BJ (cell line): ENCODE measurements at regions of chr17 and their contacts with region 1.

Region 1: DNA sequence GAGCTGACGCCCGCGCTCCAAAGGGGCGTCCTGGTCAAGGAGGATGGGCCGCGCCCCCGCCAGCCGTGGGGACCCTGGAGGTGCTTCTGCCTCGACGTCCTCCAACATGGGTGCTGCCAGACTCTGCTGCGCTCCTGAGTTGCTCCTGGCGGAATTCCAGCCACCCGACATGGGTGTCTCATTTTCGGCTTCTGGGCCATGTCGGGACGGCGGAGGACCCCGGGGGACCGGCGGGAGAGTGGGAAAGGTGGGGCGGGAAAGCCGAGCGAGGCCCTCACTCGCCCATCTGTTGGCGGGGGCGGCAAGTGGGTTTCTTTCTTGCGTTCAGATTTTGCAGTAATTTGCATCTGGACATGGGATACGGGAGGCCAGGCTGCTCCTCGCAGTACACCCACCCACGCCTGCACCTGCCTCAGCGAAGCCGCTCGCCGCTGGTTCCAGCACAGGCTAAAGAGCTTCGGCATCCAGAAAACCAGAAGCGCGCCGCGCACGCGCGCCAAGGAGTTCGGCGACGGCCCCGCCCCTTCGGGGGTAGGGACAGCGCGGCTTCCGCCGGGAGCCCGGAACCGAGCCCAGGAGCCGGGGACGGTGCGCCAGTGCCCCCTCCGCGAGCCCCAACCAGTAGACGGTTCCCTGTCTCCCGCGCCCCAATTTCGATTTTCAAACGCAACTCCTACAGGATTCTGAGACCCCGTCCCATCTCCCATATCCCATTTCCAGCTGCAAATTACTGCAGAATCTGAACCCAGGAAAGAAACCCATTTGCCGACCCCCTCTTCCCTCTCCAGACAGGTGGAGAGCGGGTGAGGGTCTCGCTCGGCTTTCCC is at the start of gene ARMC7:
- DNase-seq: peak; percentile 38
- H3K4me3 ChIP-seq: peak within 1 kb of the TSS; percentile 90
- H3K27me3 ChIP-seq: no peaks in the 10 kb centered on the region
- CTCF ChIP-seq: no peak
- polyA plus RNA-seq, gene ARMC7: 5.7 and 6.9 TPM in 2 replicates

Region 2: GRCh38 chr17:73782641-73783381 is 1326.8 kb before region 1 on chr17:
- CTCF ChIA-PET with region 1: no interaction called
- POLR2A ChIA-PET with region 1: no interaction called
- DNase-seq: no peak
- H3K4me3 ChIP-seq: no peak overlapping the region
- H3K27me3 ChIP-seq: no peaks in the 10 kb centered on the region
- CTCF ChIP-seq: no peak

Region 3: GRCh38 chr17:75046582-75047289 is 62.9 kb before region 1 on chr17 and contains the starts of genes ATP5PD and KCTD2:
- CTCF ChIA-PET with region 1: interaction called, 11 read pairs
- POLR2A ChIA-PET with region 1: no interaction called
- DNase-seq: peak; percentile 85
- H3K4me3 ChIP-seq: peak within 1 kb of the TSS; percentile 100
- H3K27me3 ChIP-seq: no peaks in the 10 kb centered on the region
- CTCF ChIP-seq: no peak
- polyA plus RNA-seq, gene ATP5PD: 160 and 304 TPM in 2 replicates
- polyA plus RNA-seq, gene KCTD2: 23.5 and 28.0 TPM in 2 replicates

Region 4: DNA sequence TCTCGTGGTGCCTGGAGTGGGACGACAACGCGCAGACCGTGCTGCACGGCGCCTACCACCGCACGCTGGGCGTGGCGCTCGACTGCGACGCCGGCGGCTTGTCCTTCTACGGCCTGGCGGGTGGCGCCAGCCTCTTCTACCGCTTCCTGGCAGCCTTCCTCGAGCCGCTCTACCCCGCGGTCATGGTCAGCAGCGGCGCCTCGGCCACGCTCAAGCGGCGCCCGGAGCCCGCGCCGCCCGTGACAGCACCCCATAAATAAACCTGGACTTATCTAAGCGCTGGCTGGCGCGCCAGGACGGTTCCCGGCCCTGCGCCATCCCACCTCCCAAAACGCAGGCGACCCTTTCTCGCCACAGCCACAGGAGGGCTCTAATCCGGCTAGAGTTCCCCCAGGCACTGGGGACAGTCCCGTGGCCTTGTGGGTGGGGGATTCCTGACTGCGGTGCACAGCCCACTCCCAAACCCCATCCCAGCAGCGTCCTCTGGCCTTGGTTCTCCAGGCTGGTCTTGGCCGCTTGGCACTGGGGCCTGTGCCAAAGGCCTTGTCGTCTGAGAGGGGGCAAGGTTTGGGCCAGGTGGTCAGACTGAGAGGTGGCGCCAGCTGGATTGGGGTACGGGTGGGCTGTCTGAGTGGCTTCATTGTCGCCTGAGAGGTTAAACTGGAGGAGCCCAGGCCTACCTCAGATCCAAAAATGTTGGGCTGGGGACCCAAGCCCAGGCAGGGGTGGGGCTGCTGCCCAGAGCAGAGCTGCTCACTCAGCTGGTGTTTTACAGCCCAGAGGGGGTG is 31.9 kb before region 1 on chr17:
- CTCF ChIA-PET with region 1: interaction called, 60 read pairs
- POLR2A ChIA-PET with region 1: interaction called, 3 read pairs
- DNase-seq: no peak
- H3K4me3 ChIP-seq: no peak overlapping the region
- H3K27me3 ChIP-seq: no peaks in the 10 kb centered on the region
- CTCF ChIP-seq: 0 out of 2 replicates have a peak, but pooled peaks have one; percentile 10

Region 5: GRCh38 chr17:75131280-75132017 is 21.8 kb after region 1 on chr17 and contains the start of gene NT5C:
- CTCF ChIA-PET with region 1: interaction called, 78 read pairs
- POLR2A ChIA-PET with region 1: no interaction called
- DNase-seq: no peak
- H3K4me3 ChIP-seq: peak within 1 kb of the TSS; percentile 66
- H3K27me3 ChIP-seq: no peaks in the 10 kb centered on the region
- CTCF ChIP-seq: peak; percentile 53
- polyA plus RNA-seq, gene NT5C: 38.3 and 61.8 TPM in 2 replicates

Region 6: DNA sequence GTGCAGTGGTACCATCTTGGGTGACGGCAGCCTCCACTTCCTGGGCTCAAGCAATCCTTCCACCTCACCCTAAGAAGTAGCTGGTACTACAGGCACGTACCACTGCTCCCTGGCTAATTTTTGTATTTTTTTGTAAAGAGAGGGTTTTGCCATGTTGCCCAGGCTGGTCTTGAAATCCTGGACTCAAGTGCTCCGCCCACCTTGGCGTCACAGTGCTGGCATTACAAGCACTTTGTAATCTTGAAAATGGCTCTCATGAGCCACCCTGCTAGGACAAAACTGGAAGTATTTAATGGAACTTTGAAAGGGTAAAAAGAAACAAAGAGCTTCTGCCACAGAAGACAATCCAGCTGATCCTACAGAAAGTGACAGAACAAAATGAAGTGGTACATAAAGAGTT is 63.9 kb after region 1 on chr17:
- CTCF ChIA-PET with region 1: interaction called, 37 read pairs
- POLR2A ChIA-PET with region 1: interaction called, 11 read pairs
- DNase-seq: no peak
- H3K4me3 ChIP-seq: no peak overlapping the region
- H3K27me3 ChIP-seq: no peaks in the 10 kb centered on the region
- CTCF ChIP-seq: no peak

Region 7: GRCh38 chr17:75238684-75239191 is 129.1 kb after region 1 on chr17:
- CTCF ChIA-PET with region 1: interaction called, 14 read pairs
- POLR2A ChIA-PET with region 1: no interaction called
- DNase-seq: no peak
- H3K4me3 ChIP-seq: no peak overlapping the region
- H3K27me3 ChIP-seq: no peaks in the 10 kb centered on the region
- CTCF ChIP-seq: peak; percentile 91